Astrocyte of the cerebellum (primary cell): ENCODE measurements at regions of chr7 and their contacts with region 1.

Region 1: GRCh38 chr7:31419505-31420055 is 79.1 kb upstream of the NEUROD6 start:
- DNase-seq: no peak
- H3K4me3 ChIP-seq: no peak overlapping the region
- CTCF ChIP-seq: no peak

Region 2: GRCh38 chr7:31345421-31345820 is 74.2 kb before region 1 on chr7:
- in situ Hi-C with region 1: loop called (anchors 5 kb)
- DNase-seq: no peak
- H3K4me3 ChIP-seq: no peak overlapping the region
- CTCF ChIP-seq: no peak